Posterior cingulate gyrus (tissue), 11 donors: ENCODE measurements at regions of chr22 and their contacts with region 1.

Region 1: GRCh38 chr22:28600546-28601143 is 79.0 kb downstream of the TTC28 start:
- DNase-seq: no peak

Region 2: GRCh38 chr22:28252539-28252938 is 348.1 kb before region 1 on chr22:
- intact Hi-C with region 1: no loop called
- DNase-seq: no peak

Region 3: DNA sequence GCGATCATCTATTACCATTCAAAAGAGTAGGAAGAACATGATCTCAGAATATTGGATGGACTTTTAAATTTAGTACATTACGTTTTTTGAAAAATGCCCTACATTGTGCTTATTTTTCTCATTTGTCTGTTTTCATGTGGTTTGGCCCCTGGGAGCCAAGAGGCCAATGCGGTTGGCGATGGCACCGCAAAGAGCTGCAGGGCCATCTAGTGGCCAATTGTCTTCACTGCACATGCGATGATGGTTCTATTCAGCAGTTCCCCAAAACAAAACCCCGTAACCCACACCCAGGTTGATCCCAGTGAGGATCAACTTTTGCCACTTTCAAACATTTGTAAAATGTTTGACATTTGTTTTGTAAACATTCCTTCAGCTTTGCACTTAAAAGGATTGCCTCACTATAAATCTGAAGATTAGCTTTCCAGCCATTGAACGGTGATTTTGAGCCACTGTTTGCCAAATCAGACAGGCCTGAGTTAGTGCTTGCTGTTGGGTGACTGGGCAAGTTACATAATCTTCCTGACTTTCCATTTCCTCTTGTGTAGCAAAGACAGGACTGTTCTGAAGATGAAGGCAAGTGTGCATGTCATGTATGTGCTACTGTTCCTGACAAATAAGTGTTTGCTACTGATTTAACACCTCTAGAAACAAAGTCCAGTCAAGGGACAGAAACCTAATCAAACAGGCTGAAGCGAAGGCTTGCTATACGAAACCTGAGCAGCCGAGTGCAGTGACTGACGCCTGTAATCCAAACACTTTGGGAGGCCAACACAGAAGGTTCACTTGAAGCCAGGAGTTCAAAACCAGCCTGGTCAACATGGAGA is 228.9 kb after region 1 on chr22:
- intact Hi-C with region 1: loop called (anchors 1 kb)
- DNase-seq: peak; percentile 40 to 95 (median 78)

Region 4: DNA sequence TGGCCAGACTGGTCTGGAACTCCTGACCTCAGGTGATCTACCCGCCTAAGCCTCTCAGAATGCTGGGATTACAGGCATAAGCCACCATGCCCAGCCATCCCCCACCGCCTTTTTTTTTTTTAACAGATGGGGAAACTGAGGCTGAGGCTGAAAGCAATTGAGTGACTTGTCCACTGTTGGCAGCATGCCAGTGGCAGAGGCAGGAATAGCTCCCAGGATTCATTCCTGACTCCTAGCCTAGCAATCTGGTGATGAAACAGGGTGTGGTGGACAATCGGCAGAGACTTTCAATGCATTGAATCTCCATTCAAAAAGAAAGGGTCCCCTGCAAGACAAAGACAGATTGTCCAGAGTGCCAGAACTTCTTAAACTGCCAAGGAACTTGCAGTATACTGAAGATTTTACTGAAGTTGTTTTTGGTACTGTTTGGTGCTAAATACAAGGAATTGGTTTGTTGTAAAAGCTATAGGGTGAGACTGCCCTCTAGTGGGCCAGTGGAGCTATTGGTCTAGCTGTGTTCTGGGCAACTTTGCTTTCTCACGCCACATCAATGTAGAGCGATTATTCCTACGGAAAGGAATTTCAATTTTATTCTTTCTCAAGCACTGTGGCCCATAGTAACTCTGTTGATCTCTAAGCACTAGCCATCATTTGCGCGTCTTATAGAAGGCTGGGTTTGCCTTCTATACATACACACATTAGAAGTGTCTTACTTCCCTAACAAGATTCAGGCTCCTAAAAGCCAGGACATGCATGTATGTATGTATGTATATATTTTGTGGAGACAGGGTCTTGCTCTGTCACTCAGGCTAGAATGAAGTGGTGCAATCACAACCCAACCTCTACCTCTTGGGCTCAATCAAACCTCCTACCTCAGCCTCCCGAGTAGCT is 440.0 kb after region 1 on chr22:
- intact Hi-C with region 1: loop called (anchors 5 kb)
- DNase-seq: peak in 6 of 10 donors; percentile 48 to 87 (median 67)

Region 5: GRCh38 chr22:29245637-29246385 is 645.2 kb after region 1 on chr22:
- intact Hi-C with region 1: loop called (anchors 1 kb)
- DNase-seq: peak; percentile 48 to 96 (median 81)